ENCODE measurements at regions of chr11 and their contacts with region 1.

Region 1: DNA sequence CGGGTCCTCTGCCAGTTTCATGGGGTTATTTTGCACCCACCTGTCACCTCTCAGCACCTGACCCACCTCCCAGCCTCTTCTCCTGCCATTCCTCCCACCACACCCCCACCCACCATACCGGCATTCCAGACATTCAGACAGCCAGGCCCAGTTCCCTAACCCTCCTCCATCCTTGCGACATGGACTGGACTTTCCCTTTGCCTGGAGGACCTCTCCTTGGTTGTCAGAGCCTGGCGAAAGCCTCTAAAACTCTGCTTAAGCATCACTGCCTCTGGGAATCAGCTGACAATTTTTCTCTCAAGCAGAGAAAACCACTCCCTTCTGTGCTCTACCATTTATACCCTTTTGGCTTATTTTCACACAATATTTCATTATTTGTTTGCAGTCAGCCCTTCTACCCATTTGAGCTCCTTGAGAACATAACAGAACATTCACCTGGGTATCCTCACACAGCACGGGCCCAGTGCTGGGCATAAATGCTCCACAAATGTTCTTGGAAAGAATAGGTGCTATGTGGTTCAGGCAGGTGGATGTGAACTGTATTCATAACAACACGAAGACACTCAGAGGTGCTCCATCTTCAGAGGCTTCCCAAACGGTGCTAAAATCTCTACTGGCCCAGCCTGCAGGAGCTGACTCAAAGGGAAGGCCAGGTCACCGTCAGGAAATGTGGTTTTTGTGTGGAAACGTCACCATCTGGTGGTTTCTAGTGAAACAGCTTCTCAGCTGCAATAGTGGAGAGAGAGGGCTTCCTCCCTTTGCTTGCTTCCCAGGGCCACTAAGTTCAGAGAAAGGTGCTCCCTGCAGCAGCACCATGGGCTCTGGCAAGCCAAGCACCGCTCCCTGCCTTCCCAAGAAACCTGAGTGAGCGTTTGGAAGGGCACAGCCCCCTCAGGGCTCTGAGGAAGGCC is 10.4 kb downstream of the SPATA19 start:
- DNase-seq: peak; percentile 69
- H3K4me3 Mint-ChIP-seq: no peak overlapping the region
- H3K27ac Mint-ChIP-seq: no peak overlapping the region
- H3K4me1 Mint-ChIP-seq: peaks cover 12% of the 10 kb centered on the region
- H3K27me3 Mint-ChIP-seq: peaks cover 9% of the 10 kb centered on the region

Region 2: GRCh38 chr11:133078591-133079404 is 756.1 kb before region 1 on chr11:
- CTCF ChIA-PET with region 1: interaction called, 31 read pairs
- DNase-seq: peak; percentile 54
- H3K4me3 Mint-ChIP-seq: no peak overlapping the region
- H3K27ac Mint-ChIP-seq: no peak overlapping the region
- H3K4me1 Mint-ChIP-seq: peaks cover 4% of the 10 kb centered on the region
- H3K27me3 Mint-ChIP-seq: peaks cover 20% of the 10 kb centered on the region

Region 3: GRCh38 chr11:133134314-133135173 is 700.4 kb before region 1 on chr11:
- CTCF ChIA-PET with region 1: interaction called, 46 read pairs
- DNase-seq: peak; percentile 64
- H3K4me3 Mint-ChIP-seq: no peak overlapping the region
- H3K27ac Mint-ChIP-seq: no peak overlapping the region
- H3K4me1 Mint-ChIP-seq: no peaks in the 10 kb centered on the region
- H3K27me3 Mint-ChIP-seq: peaks cover 11% of the 10 kb centered on the region

Region 4: DNA sequence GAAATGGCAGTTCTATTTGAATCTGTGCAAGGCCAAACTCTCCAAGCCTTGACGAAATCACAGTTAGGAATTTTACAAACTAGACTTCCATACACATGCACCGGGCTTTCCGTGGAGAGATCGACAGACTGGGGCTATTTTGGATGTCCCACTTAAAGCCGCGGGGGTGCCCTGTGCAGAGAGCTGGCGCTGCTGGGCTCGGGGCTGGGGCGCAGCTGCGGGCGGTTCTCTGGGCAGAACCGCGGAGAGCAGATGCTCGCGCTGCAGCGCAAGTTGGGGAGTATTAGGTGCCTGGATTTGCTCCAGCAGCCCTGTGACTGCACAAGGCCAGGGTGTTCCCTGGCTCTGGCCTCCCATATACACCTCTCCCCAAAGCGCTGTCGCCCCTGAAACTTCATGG is 56.8 kb before region 1 on chr11:
- CTCF ChIA-PET with region 1: no interaction called
- DNase-seq: no peak
- H3K4me3 Mint-ChIP-seq: no peak overlapping the region
- H3K27ac Mint-ChIP-seq: no peak overlapping the region
- H3K4me1 Mint-ChIP-seq: no peaks in the 10 kb centered on the region
- H3K27me3 Mint-ChIP-seq: peaks cover 9% of the 10 kb centered on the region

Region 5: GRCh38 chr11:134045782-134046635 is 211.1 kb after region 1 on chr11:
- CTCF ChIA-PET with region 1: no interaction called
- DNase-seq: peak; percentile 73
- H3K4me3 Mint-ChIP-seq: no peak overlapping the region
- H3K27ac Mint-ChIP-seq: peak overlapping the region; percentile 13
- H3K4me1 Mint-ChIP-seq: peaks cover 17% of the 10 kb centered on the region
- H3K27me3 Mint-ChIP-seq: peaks cover 66% of the 10 kb centered on the region